ENCODE measurements at regions of chr18 and their contacts with region 1.

Region 1: DNA sequence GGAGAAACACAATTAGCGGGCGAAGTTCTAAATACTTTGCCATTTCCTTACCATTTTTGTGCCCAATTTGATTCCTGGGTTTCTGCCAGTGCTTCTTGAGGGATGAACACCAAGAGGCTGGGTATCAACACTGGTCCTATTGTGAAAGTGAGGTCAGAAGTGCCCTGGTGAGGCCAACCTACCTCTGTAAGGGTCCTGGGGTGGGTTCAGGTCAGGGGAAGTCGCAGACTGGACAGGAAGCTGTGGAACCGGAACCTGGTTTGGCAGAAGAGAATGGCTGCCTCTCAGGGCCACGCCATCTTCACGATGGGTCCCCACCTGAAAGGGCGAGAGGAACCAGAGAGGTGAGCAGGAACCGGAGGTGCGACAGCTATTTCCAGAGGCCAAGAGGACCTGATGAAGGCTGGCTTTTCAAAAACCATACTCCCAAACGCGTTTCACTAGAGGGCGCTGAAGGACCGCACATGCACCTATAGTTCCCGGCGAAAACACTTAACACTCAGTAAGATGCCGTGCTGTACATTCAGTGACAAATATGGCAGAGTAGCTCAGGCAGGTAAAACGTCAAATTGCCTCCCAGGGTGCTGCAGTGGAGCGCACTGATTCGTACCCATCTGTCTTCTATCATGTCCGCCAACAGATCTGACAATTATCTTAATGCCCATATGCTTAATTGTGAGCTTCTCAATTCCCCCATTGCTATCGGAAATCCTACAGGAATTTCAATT is 275.3 kb upstream of the CCDC68 start:
- DNase-seq: peak; percentile 68 to 90 (median 87)
- H3K4me3 ChIP-seq: no peak overlapping the region
- H3K27ac ChIP-seq: peak overlapping the region in 1 of 2 donors; percentile 0
- H3K4me1 ChIP-seq: peaks cover 0 to 4% (median 0%) of the 10 kb centered on the region in 3 donors
- H3K27me3 ChIP-seq: no peaks in the 10 kb centered on the region
- CTCF ChIP-seq: peak; percentile 87

Region 2: GRCh38 chr18:55110436-55110835 is 124.1 kb before region 1 on chr18:
- intact Hi-C with region 1: no loop called
- DNase-seq: peak in 1 of 5 donors; percentile 63
- H3K4me3 ChIP-seq: no peak overlapping the region
- H3K27ac ChIP-seq: peak overlapping the region in 1 of 2 donors; percentile 46
- H3K4me1 ChIP-seq: peaks cover 0 to 3% (median 0%) of the 10 kb centered on the region in 3 donors
- H3K27me3 ChIP-seq: no peaks in the 10 kb centered on the region
- CTCF ChIP-seq: no peak

Region 3: DNA sequence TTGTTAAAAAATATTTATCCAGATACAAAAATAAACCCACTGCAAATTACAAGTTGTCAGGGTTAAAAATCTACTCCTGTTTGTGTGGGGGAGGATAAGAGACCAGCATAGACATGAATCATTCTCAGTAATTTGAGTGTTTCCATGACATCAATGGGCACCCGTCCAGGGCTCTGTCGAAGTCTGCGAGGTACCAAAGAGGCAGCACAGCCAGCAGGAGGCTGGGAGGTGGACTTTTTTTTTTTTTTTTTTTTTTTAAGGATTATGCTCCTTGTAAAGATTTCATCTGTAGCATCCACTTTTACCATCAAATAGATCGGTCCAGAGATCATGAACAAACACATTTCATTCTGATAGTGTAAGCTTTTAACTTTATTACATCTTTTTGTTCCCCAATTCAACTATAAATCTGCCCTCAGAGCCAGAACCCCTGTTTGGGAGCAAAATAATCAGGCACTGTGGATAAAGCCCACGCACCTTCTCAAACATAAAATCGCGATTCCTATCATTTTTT is 171.4 kb after region 1 on chr18:
- intact Hi-C with region 1: loop called (anchors 10 kb)
- DNase-seq: peak in 4 of 5 donors; percentile 70 to 88 (median 84)
- H3K4me3 ChIP-seq: no peak overlapping the region
- H3K27ac ChIP-seq: no peak overlapping the region
- H3K4me1 ChIP-seq: peaks cover 0 to 3% (median 0%) of the 10 kb centered on the region in 3 donors
- H3K27me3 ChIP-seq: no peaks in the 10 kb centered on the region
- CTCF ChIP-seq: no peak

Region 4: GRCh38 chr18:55546851-55547704 is 312.5 kb after region 1 on chr18:
- intact Hi-C with region 1: no loop called
- DNase-seq: peak in 3 of 5 donors; percentile 13 to 70 (median 36)
- H3K4me3 ChIP-seq: no peak overlapping the region
- H3K27ac ChIP-seq: no peak overlapping the region
- H3K4me1 ChIP-seq: no peaks in the 10 kb centered on the region
- H3K27me3 ChIP-seq: no peaks in the 10 kb centered on the region
- CTCF ChIP-seq: no peak

Region 5: DNA sequence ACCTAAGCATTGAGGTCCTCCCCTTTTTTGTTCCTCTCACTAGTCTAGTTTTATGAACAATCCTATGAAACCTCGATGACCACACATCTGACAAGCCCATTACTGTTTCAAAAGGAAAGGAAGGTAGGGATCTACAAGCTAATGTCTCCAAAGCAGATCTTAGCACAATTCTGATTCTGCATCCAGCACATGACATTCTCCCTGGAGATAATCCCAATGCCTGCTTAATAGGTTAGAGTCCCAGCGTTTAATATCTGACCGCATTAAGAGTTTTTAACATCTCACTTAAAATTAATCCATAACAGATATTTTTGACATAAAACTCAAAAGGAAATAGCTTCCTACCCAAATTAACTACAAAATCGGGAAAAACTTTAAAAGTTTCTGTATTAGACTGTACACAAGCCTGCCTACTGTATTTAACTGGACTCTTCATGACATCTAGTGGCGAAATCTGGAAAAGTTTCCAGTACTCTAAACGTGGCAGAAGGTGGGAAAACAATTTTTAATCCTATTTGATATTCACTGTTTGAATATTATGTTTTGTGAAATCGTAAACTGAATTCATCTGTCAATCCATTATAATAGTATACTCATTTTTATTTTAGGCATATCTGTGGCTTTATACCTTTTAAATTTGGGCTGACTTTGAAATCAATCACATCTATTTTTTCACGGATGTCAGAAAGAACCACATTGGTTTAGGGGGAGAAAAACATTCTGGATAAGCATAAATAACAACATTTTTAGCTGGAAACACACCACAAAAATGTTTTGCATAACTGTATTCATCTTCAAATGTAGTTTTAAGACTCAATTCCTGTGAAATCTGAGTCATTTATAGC is 1341.5 kb after region 1 on chr18:
- intact Hi-C with region 1: loop called (anchors 5 kb)
- DNase-seq: peak in 2 of 5 donors; percentile 75 to 85
- H3K4me3 ChIP-seq: no peak overlapping the region
- H3K27ac ChIP-seq: no peak overlapping the region
- H3K4me1 ChIP-seq: peaks cover 0 to 6% (median 6%) of the 10 kb centered on the region in 3 donors
- H3K27me3 ChIP-seq: no peaks in the 10 kb centered on the region
- CTCF ChIP-seq: peak; percentile 61